Activated T-helper 1 cell treated with anti-CD3 and anti-CD28 coated beads, Interleukin-12 subunit alpha, Interleukin-12 subunit beta, Interleukin-2, Interleukin-4 antibody, amounts not matched to agents 30 ng/mL and 10 ng/mL and 1 ng/mL, durations not matched to agents 14 hours and 24 hours and 36 hours (primary cell): ENCODE measurements at regions of chr3 and their contacts with region 1.

Region 1: DNA sequence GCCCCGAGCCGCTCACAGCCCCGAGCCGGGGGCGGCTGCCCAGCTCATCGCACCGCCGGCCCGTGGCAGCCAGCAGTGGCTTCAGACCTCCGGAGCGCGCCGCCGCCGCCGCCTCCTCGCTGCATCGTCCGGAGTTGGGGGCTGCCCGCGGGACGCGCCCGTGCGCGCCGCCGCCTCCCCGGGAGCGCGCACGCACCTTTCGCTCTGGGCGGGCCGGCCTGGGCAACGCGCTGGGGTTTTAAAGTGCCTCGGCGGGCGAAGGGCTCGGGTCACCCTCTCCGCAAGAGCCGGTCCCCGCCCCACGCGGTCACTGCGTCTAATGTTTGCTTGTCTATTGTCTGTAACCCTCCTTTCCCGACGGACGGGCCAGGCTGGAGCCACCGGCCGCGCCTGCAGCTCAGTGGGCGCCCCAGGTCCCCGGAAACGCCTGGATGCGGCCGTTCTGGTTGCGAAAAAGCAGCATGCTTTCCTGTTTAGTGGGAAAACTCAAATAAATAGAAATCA is at the start of gene RYK:
- DNase-seq: peak; percentile 66
- H3K4me3 Mint-ChIP-seq: peak within 1 kb of the TSS; percentile 88
- H3K27ac Mint-ChIP-seq: peak within 1 kb of the TSS; percentile 89
- H3K4me1 Mint-ChIP-seq: peaks cover 35% of the 10 kb centered on the region
- H3K27me3 Mint-ChIP-seq: peaks cover 35% of the 10 kb centered on the region
- total RNA-seq, gene RYK: 15.8 and 16.8 TPM in 2 replicates

Region 2: GRCh38 chr3:134239538-134239937 is 11.2 kb before region 1 on chr3:
- intact Hi-C with region 1: loop called (anchors 1 kb)
- DNase-seq: no peak
- H3K4me3 Mint-ChIP-seq: peak overlapping the region; percentile 5
- H3K27ac Mint-ChIP-seq: peak overlapping the region; percentile 24
- H3K4me1 Mint-ChIP-seq: peaks cover 44% of the 10 kb centered on the region
- H3K27me3 Mint-ChIP-seq: peaks cover 24% of the 10 kb centered on the region

Region 3: GRCh38 chr3:134299185-134299887 is 48.6 kb after region 1 on chr3:
- intact Hi-C with region 1: loop called (anchors 1 kb)
- DNase-seq: no peak
- H3K4me3 Mint-ChIP-seq: no peak overlapping the region
- H3K27ac Mint-ChIP-seq: no peak overlapping the region
- H3K4me1 Mint-ChIP-seq: no peaks in the 10 kb centered on the region
- H3K27me3 Mint-ChIP-seq: peaks cover 55% of the 10 kb centered on the region